Activated CD8-positive, alpha-beta T cell treated with anti-CD3 and anti-CD28 coated beads, Interleukin-2, amount 10 ng/mL, durations not matched to agents 7 days and 5 days (primary cell): ENCODE measurements at regions of chr2 and their contacts with region 1.

Region 1: GRCh38 chr2:234288974-234289455 is 207.9 kb downstream of the ARL4C start:
- DNase-seq: peak; percentile 75
- ATAC-seq: no peak
- H3K4me3 Mint-ChIP-seq: no peak overlapping the region
- H3K27ac Mint-ChIP-seq: peak overlapping the region; percentile 97
- H3K4me1 Mint-ChIP-seq: peaks cover 78% of the 10 kb centered on the region
- H3K27me3 Mint-ChIP-seq: no peaks in the 10 kb centered on the region

Region 2: DNA sequence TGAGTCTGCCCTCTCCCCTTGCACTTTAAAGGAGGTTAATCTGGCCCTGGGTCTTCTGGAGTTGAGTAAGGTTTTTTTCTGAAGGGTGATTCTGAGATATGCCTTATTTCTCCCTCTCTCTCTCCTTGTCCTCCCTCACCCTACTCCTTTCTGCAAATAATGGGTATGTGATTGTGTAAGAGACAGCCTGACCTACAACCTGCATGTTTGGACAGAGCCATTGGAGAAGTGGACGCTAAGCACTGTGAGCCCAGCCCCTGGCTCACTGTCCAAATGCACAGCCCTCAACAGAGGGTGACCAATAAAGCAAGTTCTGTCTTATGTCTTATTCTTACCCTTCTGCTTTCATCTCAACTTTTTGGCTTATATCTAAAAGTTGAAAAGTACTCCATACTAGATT is 167.0 kb before region 1 on chr2:
- CTCF ChIA-PET with region 1: no interaction called
- POLR2A ChIA-PET with region 1: no interaction called
- DNase-seq: no peak
- ATAC-seq: no peak
- H3K4me3 Mint-ChIP-seq: no peak overlapping the region
- H3K27ac Mint-ChIP-seq: no peak overlapping the region
- H3K4me1 Mint-ChIP-seq: no peaks in the 10 kb centered on the region
- H3K27me3 Mint-ChIP-seq: peaks cover 13% of the 10 kb centered on the region

Region 3: GRCh38 chr2:234231460-234231859 is 57.6 kb before region 1 on chr2:
- CTCF ChIA-PET with region 1: no interaction called
- POLR2A ChIA-PET with region 1: no interaction called
- DNase-seq: no peak
- ATAC-seq: no peak
- H3K4me3 Mint-ChIP-seq: no peak overlapping the region
- H3K27ac Mint-ChIP-seq: no peak overlapping the region
- H3K4me1 Mint-ChIP-seq: no peaks in the 10 kb centered on the region
- H3K27me3 Mint-ChIP-seq: peaks cover 2% of the 10 kb centered on the region

Region 4: DNA sequence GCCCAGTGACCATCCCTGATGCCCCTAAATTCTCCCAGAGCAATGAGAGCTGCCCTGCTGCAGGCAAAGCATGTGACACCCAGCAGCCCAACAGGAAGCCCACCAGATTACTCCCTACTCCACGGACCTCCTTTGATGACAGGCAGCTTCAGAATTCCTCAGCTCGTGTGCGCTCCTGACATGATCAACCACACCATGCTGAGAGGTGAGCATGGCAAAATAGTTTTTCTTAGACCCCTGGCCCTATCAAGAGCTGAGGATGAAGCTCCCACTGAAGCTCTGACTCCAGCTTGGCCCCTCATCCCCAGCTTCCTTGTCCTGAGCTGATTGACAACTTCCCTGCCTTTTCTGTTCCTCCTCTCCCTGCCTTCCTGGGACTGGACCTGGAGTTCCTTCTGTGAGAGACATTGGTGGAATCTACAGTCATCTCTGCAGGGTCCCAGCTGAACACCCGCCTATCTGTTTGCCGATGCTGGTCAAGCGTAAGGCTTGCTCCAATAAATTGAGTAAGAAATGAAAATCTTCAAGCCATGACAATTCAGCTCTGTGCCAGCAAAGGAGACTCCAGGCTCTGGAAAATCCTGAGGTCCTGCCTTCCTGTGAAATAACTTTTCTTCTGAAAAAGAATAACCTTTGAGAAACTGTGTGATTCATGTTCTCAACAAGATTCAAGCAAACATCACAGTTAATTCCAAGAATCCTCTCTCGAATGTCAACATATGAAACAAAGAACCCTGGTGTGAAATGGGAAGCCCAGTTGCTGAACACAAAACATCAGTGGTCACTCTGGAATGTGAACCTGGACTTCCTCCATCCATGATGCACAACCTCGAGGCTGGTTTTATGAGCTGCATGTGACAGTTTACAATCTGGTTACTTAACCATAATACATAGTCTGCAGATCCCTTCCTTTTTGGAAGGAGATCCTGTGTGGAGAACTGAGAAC is 37.4 kb before region 1 on chr2:
- CTCF ChIA-PET with region 1: no interaction called
- POLR2A ChIA-PET with region 1: no interaction called
- DNase-seq: no peak
- ATAC-seq: no peak
- H3K4me3 Mint-ChIP-seq: no peak overlapping the region
- H3K27ac Mint-ChIP-seq: no peak overlapping the region
- H3K4me1 Mint-ChIP-seq: peaks cover 7% of the 10 kb centered on the region
- H3K27me3 Mint-ChIP-seq: peaks cover 13% of the 10 kb centered on the region

Region 5: GRCh38 chr2:234261736-234262135 is 27.3 kb before region 1 on chr2:
- CTCF ChIA-PET with region 1: no interaction called
- POLR2A ChIA-PET with region 1: no interaction called
- DNase-seq: no peak
- ATAC-seq: no peak
- H3K4me3 Mint-ChIP-seq: no peak overlapping the region
- H3K27ac Mint-ChIP-seq: no peak overlapping the region
- H3K4me1 Mint-ChIP-seq: peaks cover 8% of the 10 kb centered on the region
- H3K27me3 Mint-ChIP-seq: peaks cover 5% of the 10 kb centered on the region

Region 6: DNA sequence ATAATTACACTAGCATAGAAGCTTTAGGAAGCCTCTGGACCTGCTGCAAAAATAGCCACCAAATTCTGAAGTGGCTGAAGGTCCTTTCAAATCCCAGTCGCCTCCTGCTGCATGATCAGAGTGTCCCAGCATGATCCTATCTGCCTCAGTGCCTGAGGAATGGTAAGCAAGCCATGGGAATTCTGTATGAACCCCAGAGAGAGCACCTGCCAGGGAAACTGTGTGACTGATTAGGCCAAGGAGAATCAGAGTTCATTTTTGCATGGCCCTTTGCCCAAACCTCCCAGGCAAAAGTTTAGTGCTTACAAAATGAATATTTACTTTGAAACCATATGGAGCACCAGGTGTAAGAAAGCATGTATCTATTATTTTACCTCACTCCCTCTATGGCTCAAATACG is 13.5 kb before region 1 on chr2:
- CTCF ChIA-PET with region 1: interaction called, 47 read pairs
- POLR2A ChIA-PET with region 1: interaction called, 4 read pairs
- DNase-seq: no peak
- ATAC-seq: no peak
- H3K4me3 Mint-ChIP-seq: no peak overlapping the region
- H3K27ac Mint-ChIP-seq: no peak overlapping the region
- H3K4me1 Mint-ChIP-seq: peaks cover 87% of the 10 kb centered on the region
- H3K27me3 Mint-ChIP-seq: no peaks in the 10 kb centered on the region

Region 7: GRCh38 chr2:234368861-234369261 is 79.8 kb after region 1 on chr2:
- CTCF ChIA-PET with region 1: interaction called, 25 read pairs
- POLR2A ChIA-PET with region 1: interaction called, 9 read pairs
- DNase-seq: peak; percentile 66
- ATAC-seq: peak; percentile 88
- H3K4me3 Mint-ChIP-seq: no peak overlapping the region
- H3K27ac Mint-ChIP-seq: peak overlapping the region; percentile 64
- H3K4me1 Mint-ChIP-seq: peaks cover 72% of the 10 kb centered on the region
- H3K27me3 Mint-ChIP-seq: no peaks in the 10 kb centered on the region

Region 8: DNA sequence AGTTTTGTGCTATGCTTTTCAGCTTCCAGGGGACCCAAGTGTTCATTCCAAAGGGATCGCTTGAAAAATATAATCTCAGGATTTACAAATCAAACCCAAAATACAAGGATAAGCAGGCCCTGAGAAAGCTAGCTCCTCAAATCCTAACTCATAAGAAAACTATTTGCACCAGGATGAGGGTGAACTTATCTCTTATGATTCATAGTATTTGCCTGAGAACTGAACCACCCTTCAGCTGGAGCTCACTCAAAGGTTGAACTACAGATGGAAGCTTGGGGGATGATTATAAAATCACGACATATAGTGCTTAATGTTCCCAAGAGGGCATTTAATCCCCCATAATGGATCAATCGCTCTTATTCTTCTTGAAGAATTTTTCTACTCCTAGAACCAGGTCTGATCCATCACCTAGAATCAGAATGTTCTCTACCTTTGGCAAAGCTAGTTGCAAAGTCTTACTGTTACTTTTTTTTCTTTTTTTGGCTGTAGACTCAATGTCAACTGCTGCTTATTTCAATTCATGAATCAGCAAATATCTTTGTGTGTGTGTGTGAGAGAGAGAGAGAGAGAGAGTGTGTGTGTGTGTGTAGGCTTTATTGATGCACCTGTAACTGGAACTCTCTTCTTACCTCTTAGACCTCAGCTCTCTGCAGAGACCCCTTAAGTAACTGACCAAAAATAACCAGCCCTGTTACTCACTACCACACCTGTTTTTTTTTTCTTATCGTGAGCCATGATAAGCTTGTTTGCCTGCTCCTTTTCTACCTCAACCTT is 163.0 kb after region 1 on chr2:
- CTCF ChIA-PET with region 1: interaction called, 28 read pairs
- POLR2A ChIA-PET with region 1: interaction called, 68 read pairs
- DNase-seq: no peak
- ATAC-seq: peak; percentile 7
- H3K4me3 Mint-ChIP-seq: peak overlapping the region; percentile 85
- H3K27ac Mint-ChIP-seq: peak overlapping the region; percentile 92
- H3K4me1 Mint-ChIP-seq: peaks cover 86% of the 10 kb centered on the region
- H3K27me3 Mint-ChIP-seq: no peaks in the 10 kb centered on the region

Region 9: GRCh38 chr2:234488913-234489451 is 200.0 kb after region 1 on chr2:
- CTCF ChIA-PET with region 1: interaction called, 49 read pairs
- POLR2A ChIA-PET with region 1: interaction called, 189 read pairs
- DNase-seq: peak; percentile 91
- ATAC-seq: peak; percentile 77
- H3K4me3 Mint-ChIP-seq: peak overlapping the region; percentile 77
- H3K27ac Mint-ChIP-seq: peak overlapping the region; percentile 97
- H3K4me1 Mint-ChIP-seq: peaks cover 88% of the 10 kb centered on the region
- H3K27me3 Mint-ChIP-seq: no peaks in the 10 kb centered on the region